GM12878 (cell line): ENCODE measurements at regions of chr20 and their contacts with region 1.

Region 1: DNA sequence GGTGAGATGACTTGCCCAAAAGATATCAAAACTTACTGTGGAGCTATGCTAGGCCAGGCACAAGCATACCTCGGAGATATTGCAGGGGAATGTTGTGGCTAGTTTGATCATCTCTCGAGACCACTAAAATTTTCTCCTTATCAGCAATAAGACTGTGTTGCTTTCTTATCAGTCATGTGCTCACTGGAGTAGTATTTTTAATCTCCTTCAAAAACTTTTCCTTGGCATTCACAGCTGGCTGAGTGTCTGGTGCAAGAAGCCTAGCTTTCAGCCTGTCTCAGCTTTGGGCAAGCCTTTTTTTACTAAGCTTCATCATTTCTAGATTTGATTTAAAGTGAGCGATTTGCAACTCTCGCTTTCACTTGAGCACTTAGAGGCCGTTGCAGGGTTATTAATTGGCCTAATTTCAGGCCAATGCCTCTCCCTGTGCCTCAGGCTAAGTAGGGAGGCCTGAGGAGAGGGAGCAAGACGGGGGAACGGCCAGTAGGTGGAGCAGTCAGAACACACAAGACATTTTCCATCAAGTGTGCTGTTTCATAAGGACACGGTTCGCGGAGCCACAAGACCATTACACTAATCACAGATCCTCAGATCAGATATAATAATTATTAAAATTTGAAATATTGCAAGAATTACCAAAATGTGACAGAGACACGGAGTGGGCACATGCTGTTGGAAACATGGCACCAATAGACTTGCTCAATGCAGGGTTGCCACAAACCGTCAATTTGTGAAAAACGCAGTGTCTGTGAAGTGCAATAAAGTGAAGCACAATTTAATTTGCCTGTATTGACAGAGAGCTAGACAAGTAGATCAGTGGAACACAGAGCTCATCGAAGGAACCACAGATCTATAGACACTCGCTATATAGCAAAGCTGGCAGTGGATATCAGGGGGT is 106.8 kb upstream of the SIRPG start:
- DNase-seq: peak; percentile 57
- ATAC-seq: peak; percentile 100
- H3K4me3 ChIP-seq: no peak overlapping the region
- H3K27ac ChIP-seq: no peak overlapping the region
- H3K4me1 ChIP-seq: peaks cover 4% of the 10 kb centered on the region
- H3K27me3 ChIP-seq: peaks cover 0 to 2% of the 10 kb centered on the region in 2 experiments; a peak in 2 of 4 replicates
- CTCF ChIP-seq: peak; percentile 80 to 89 (median 81)
- EP300 ChIP-seq: no peak
- POLR2A ChIP-seq: no peak
- RAD21 ChIP-seq: peak; percentile 79

Region 2: DNA sequence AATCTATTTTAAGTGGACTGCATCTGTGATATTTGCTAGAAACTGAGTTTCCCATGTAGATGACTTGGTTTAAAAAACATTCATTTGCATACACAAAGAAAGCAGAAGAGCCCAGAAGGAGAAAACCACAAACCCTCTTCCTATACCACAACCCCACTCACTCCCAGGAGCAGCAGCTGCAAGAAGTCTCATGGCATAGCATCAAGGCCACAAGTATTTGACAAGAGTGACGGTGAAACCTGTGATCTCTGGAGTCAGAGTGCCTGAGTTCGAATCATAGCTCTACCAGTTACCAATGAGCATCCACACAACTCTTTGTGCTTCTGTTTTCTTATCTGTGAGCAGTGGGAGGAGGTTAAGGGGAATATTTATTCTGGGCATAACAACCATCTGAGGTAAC is 62.1 kb before region 1 on chr20:
- CTCF ChIA-PET with region 1: no interaction called
- POLR2A ChIA-PET with region 1: no interaction called
- RAD21 ChIA-PET with region 1: no interaction called
- SMC1A ChIA-PET with region 1: no interaction called
- in situ Hi-C with region 1: no loop called
- intact Hi-C with region 1: no loop called
- DNase-seq: no peak
- ATAC-seq: no peak
- H3K4me3 ChIP-seq: no peak overlapping the region
- H3K27ac ChIP-seq: no peak overlapping the region
- H3K4me1 ChIP-seq: no peaks in the 10 kb centered on the region
- H3K27me3 ChIP-seq: no peaks in the 10 kb centered on the region; a peak in 1 of 4 replicates
- CTCF ChIP-seq: no peak
- EP300 ChIP-seq: no peak
- POLR2A ChIP-seq: no peak
- RAD21 ChIP-seq: no peak

Region 3: DNA sequence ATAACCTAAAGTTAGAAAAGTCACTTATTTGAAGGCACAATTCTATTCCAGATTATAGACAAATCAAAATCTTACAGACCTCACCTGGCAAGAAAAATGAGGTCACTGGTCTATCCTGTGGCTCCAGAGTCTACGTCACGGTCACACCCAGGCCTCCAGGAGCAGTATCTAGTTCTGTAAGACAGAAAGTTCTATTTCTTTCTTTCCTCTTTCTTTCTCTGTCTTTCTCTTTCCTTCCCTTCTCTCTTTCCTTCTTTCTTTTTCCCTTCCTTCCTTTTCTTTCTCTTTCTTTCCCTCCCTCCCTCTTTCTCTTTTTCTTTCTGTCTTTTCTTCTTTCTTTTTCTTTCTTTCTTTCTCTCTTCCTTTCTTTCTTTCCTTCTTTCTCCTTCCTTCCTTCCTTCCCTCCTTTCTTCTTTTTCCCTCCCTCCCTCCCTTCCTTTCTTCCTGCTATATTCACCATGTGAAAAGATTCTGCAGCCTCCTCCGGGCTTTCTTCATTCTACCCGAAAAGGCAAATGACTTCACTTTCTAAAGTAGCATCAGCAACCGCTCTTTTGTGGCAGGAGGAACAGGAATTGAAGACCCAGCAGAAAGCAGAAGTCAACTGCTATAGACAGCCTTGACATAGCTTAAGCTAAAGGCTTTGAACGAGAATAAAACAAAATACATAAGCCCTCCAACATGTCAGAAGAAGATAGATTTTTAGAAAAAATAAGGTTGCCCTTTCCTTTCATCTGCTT is 22.9 kb before region 1 on chr20:
- CTCF ChIA-PET with region 1: interaction called, 13 read pairs
- POLR2A ChIA-PET with region 1: interaction called, 5 read pairs
- RAD21 ChIA-PET with region 1: interaction called, 9 read pairs
- SMC1A ChIA-PET with region 1: interaction called, 9 read pairs
- in situ Hi-C with region 1: no loop called
- intact Hi-C with region 1: no loop called
- DNase-seq: no peak
- ATAC-seq: peak; percentile 93
- H3K4me3 ChIP-seq: no peak overlapping the region
- H3K27ac ChIP-seq: no peak overlapping the region
- H3K4me1 ChIP-seq: no peaks in the 10 kb centered on the region
- H3K27me3 ChIP-seq: no peaks in the 10 kb centered on the region; a peak in 1 of 4 replicates
- CTCF ChIP-seq: no peak
- EP300 ChIP-seq: no peak
- POLR2A ChIP-seq: no peak
- RAD21 ChIP-seq: no peak

Region 4: GRCh38 chr20:1752045-1752444 is 12.3 kb before region 1 on chr20:
- CTCF ChIA-PET with region 1: interaction called, 15 read pairs
- POLR2A ChIA-PET with region 1: no interaction called
- RAD21 ChIA-PET with region 1: interaction called, 3 read pairs
- SMC1A ChIA-PET with region 1: interaction called, 14 read pairs
- in situ Hi-C with region 1: no loop called
- intact Hi-C with region 1: no loop called
- DNase-seq: no peak
- ATAC-seq: no peak
- H3K4me3 ChIP-seq: no peak overlapping the region
- H3K27ac ChIP-seq: no peak overlapping the region
- H3K4me1 ChIP-seq: no peaks in the 10 kb centered on the region
- H3K27me3 ChIP-seq: no peaks in the 10 kb centered on the region; a peak in 1 of 4 replicates
- CTCF ChIP-seq: no peak
- EP300 ChIP-seq: no peak
- POLR2A ChIP-seq: no peak
- RAD21 ChIP-seq: no peak